GM10248 (cell line): ENCODE measurements at regions of chr15 and their contacts with region 1.

Region 1: GRCh38 chr15:90086868-90087268 is 15.4 kb downstream of the IDH2 start:
- DNase-seq: peak; percentile 71
- CTCF ChIP-seq: peak; percentile 71

Region 2: DNA sequence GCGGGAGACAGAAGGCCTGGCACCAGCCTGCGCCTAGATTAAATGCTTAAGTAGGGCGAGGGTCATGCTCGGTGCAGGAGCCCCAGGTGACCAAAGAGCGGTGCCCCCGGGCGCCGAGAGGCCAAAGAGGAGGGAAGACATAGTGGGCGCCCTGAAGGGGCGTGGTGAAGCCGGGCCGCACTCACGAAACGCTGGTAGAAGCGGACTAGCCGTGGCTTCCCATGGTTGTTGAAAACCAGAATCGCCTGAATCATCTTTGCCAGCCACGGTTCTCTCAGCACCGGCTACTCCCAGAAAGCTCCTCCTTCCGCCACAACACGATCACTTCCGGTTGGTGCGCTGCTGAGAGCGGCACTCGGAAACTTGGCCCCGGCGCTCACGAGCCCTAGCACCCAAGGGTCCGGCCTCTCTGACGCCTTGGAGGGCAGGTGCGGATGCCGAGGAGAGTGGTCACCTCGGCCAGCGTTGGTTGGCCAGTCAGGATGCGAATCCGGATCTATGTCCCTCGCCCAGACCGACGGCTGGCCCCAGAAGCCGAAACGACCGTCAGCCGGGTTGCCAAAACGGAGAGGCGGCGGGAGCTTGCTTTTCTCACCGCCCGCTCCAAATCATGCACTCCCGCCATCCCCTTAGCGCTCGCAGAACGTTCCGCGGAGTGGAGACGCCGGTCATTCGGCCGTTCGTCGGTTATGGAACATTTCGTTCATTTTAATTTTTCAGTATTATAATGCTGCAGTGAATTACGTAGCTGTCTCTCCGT is 193.0 kb before region 1 on chr15 and contains the start of gene AP3S2:
- CTCF ChIA-PET with region 1: interaction called, 42 read pairs
- POLR2A ChIA-PET with region 1: no interaction called
- DNase-seq: peak; percentile 88
- CTCF ChIP-seq: no peak

Region 3: DNA sequence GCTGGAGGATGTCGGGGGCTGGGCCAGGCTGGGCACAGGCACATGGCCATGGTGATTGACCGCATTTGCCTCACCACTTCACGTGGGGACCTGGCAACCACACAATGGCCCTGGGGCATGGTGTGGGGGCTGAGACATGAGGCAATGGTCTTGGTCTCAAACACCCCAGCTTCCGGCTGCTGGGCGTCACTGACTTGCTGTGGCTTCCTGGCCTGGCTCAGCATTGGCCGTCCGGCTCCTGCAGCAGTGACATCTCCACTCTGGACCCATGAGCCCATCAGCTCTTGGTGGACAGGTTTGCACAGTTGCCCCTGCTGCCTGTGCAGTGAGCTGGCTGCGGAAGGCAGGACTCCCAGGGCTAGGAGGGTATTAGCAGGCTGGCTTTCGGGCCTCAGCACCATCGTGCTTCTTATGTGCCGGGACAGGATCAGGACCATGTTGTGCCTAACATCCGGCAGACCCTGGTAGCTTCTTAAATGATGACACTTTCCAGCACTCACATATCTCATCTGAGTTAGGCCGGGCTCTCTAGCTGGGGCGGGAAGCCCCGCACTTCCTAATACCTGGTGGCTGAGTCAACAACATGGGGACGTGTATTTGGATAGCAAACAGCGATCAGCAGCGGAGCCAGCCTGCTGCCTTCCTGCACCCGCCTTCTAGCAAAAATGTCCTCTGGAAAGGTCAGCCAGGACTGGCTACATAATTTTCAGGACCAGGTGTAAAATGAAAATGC is 51.6 kb before region 1 on chr15:
- CTCF ChIA-PET with region 1: interaction called, 11 read pairs
- POLR2A ChIA-PET with region 1: no interaction called
- DNase-seq: no peak
- CTCF ChIP-seq: no peak

Region 4: DNA sequence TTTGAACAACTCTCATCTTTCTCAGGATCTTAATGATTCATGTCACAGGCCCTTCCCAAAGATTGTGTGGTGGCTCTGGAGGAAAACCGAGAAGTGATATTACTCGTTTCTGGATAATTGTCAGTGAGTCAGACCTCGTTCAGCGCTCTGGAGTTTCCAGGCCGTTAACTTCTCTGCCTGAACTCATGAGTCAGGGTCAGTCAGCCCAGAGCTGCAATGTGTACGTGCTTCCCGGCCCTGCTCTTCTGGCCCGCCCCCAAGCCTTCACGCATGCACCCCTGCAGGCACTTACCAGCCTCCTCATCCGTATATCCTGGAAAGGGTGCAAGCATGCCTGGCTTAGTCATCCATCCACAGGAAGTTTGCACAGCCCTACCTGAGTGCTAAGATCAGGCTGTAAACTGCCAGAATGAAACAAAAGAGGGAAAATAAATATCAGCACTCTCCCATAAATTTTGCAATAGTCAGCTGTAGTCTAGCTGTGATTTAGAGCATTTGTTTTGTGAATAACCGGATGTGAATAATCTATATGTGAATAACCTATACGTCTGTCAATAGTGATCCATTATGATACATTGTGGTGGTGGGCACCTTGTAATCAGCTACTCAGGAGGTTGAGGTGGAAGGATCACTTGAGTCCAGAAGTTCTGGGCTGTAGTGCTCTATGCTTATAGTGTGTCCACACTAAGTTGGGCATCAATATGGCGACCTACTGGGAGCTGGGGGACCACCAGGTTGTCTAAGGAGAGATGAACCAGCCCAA is 79.0 kb after region 1 on chr15:
- CTCF ChIA-PET with region 1: no interaction called
- POLR2A ChIA-PET with region 1: no interaction called
- DNase-seq: peak; percentile 50
- CTCF ChIP-seq: no peak

Region 5: DNA sequence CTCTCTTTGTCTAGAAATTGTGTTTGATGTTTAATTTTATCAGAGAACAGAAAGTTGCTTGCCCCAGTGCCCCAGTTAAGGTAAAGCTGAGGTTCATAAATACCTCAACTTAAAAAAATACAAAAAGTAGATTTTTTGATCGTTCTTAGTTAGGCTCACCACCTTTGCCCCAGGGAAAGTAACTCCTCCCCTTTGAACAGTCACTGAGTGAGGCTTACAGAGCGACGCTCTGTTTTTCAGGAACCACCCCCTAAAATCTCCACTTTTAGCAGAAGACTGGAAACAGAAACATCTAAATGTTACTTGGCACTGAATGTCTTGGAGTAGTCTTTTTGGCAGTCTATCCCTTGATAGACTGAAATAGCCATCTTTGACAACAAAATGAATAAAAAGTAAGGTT is 655.2 kb after region 1 on chr15:
- CTCF ChIA-PET with region 1: no interaction called
- POLR2A ChIA-PET with region 1: no interaction called
- DNase-seq: no peak
- CTCF ChIP-seq: no peak